Spleen (tissue), 13 donors: ENCODE measurements at regions of chr9 and their contacts with region 1.

Region 1: DNA sequence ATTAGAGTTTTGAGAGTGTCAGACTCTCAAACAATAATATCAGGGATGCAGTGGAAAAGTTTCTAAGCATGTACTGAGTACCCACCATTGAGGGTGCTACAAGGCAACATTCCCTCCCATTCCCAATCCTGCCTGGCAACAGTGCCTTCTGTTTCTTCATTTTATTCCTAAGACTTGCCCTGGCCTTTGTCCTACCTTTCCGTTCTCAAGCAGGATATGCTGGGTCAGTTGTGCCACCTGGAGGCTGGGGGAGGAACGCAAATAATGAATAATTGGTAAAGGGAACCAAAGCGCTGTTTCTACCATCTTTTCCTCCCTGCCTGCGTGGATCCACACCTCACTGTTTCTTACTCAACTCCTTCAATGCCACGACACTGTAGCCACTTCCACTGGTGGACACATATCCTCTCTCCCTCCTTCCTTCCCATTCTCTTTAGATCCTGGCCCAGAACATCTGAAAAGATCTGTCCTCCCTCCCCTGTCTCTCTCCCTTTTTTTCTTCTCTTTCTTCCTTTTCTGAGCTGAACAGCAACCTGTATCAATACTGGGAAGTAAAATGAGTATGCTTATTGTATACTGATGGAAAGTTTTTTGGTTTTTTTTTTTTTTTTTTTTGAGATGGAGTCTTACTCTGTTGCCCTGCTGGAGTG is 149.5 kb downstream of the C9orf152 start:
- DNase-seq: no peak
- H3K4me3 ChIP-seq: no peak overlapping the region
- H3K27ac ChIP-seq: peak overlapping the region in 5 of 8 donors; percentile 23 to 74 (median 32)
- H3K4me1 ChIP-seq: peaks cover 9 to 75% (median 43%) of the 10 kb centered on the region in 6 donors
- H3K27me3 ChIP-seq: no peaks in the 10 kb centered on the region
- CTCF ChIP-seq: peak in 10 of 11 experiments; percentile 9 to 78 (median 52)
- POLR2A ChIP-seq: no peak

Region 2: DNA sequence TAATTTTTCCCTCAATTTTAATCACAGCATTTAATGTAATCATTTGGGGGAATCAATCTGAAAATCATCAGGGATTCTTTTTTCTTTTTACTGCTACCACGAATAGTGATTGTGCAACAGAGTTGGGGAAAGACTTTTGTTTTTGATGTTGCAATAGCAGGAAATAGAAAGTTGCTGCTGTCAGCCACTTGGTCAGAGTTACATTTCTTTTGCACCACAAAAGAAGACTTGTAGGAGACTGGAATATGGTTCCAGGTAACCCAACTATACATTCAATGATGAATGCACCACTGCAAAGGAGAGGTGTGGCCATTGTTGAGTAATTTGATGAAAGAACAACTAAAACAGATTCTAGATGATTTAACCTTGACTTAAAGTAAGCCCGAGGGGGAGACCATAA is 324.7 kb before region 1 on chr9:
- intact Hi-C with region 1: no loop called
- DNase-seq: no peak
- H3K4me3 ChIP-seq: no peak overlapping the region
- H3K27ac ChIP-seq: no peak overlapping the region
- H3K4me1 ChIP-seq: no peaks in the 10 kb centered on the region
- H3K27me3 ChIP-seq: peaks cover 0 to 8% (median 0%) of the 10 kb centered on the region in 7 donors
- CTCF ChIP-seq: no peak
- POLR2A ChIP-seq: no peak

Region 3: GRCh38 chr9:110152704-110153374 is 94.4 kb after region 1 on chr9:
- intact Hi-C with region 1: loop called (anchors 5 kb)
- DNase-seq: no peak
- H3K4me3 ChIP-seq: no peak overlapping the region
- H3K27ac ChIP-seq: peak overlapping the region in 5 of 8 donors; percentile 41 to 86 (median 79)
- H3K4me1 ChIP-seq: peaks cover 41 to 100% (median 94%) of the 10 kb centered on the region in 6 donors
- H3K27me3 ChIP-seq: no peaks in the 10 kb centered on the region
- CTCF ChIP-seq: peak; percentile 52 to 81 (median 74)
- POLR2A ChIP-seq: no peak